ENCODE measurements at regions of chr19 and their contacts with region 1.

Region 1: GRCh38 chr19:29873024-29873800 is 61.4 kb downstream of the CCNE1 start:
- DNase-seq: peak; percentile 45 to 52
- H3K4me3 ChIP-seq: peak overlapping the region in 1 of 3 donors; percentile 11
- H3K27ac ChIP-seq: no peak overlapping the region
- H3K4me1 ChIP-seq: peaks cover 7 to 15% of the 10 kb centered on the region in 2 donors
- H3K27me3 ChIP-seq: no peaks in the 10 kb centered on the region
- CTCF ChIP-seq: peak; percentile 22 to 90 (median 76)
- POLR2A ChIP-seq: no peak

Region 2: DNA sequence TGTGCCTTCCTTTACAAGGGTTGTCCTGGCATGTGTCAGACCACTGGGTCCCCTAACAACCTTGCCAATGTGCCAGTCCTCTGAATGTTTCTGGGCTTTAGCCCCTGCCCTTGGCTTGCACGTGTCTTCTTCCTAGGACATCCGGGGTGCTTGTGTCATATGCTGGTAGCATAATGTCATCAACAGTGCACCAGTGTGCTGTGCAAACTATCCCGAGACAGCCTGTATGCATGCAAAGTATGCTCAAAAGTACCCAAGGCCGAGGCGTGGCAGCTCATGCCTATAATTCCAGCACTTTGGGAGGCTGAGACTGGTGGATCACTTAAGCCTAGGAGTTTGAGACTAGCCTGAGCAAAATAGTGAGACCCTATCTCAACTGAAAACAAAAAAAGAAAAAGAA is 137.4 kb before region 1 on chr19:
- intact Hi-C with region 1: loop called (anchors 10 kb)
- DNase-seq: no peak
- H3K4me3 ChIP-seq: no peak overlapping the region
- H3K27ac ChIP-seq: no peak overlapping the region
- H3K4me1 ChIP-seq: no peaks in the 10 kb centered on the region
- H3K27me3 ChIP-seq: no peaks in the 10 kb centered on the region
- CTCF ChIP-seq: no peak
- POLR2A ChIP-seq: no peak

Region 3: DNA sequence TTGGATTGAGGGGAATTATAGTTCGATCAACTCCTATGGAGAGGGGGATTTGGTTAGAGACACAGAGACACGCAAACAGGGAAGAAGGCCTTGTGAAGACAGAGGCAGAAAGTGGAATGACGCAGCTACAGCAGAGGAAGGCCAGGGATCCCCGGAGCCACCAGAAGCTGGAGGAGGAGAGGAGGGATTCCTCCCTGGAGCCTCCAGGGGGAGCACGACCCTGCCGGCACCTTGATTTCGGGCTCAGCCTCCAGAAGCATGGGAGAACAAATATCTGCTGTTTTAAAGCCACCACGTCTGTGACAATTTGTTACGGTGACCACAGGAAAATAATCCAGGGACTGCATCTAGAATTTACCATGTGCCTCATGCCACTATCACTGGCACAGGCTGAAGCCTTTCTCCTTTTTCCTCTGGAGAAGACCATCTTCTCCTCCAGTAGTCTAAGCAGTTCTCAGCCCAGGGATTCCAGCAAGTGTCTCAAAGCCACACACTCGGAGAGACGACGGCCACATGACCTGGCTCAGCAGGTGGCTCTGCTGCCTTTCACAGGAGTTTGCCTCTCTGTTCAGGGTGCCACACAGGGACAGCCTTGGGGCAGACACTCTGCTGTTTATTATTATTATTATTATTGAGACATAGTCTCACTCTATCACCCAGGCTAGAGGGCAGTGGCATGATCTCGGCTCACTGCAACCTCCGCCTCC is 101.4 kb before region 1 on chr19:
- intact Hi-C with region 1: loop called (anchors 5 kb)
- DNase-seq: peak; percentile 54 to 65
- H3K4me3 ChIP-seq: no peak overlapping the region
- H3K27ac ChIP-seq: no peak overlapping the region
- H3K4me1 ChIP-seq: no peaks in the 10 kb centered on the region
- H3K27me3 ChIP-seq: no peaks in the 10 kb centered on the region
- CTCF ChIP-seq: peak; percentile 33 to 80 (median 56)
- POLR2A ChIP-seq: no peak

Region 4: DNA sequence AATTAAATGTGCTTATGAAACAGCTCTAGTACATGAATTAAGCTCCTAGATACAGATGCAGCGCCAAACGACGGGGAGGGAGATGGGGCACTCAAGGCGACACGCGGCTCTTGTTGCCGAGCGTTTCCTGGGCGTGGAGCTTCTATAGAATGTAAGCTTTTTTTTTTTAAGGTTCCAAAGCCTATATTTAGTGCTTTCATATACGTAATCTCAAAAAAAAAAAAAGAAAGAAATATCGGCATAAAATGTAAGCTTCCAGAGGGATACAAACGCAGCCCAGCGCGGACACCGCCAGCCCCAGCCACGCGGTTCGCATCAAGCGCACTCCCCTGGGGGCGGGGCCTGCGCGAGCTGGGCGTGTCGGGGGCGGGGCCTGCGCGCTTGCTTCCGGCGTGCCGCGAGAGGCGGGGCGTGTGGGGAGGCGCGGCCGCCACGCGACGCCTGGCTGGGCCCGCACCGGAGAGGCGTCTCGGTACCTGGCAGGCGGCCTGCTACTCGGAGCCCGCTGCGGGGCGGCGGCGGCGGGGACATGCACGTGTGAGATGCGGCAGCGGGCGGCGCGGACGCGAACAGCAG is 68.7 kb after region 1 on chr19 and contains the start of gene URI1:
- intact Hi-C with region 1: no loop called
- DNase-seq: peak; percentile 89 to 91
- H3K4me3 ChIP-seq: peak within 1 kb of the TSS; percentile 27 to 67 (median 61)
- H3K27ac ChIP-seq: peak within 1 kb of the TSS; percentile 11 to 78 (median 31)
- H3K4me1 ChIP-seq: peaks cover 14 to 19% of the 10 kb centered on the region in 2 donors
- H3K27me3 ChIP-seq: no peaks in the 10 kb centered on the region
- CTCF ChIP-seq: no peak
- POLR2A ChIP-seq: peak in 1 of 2 donors; percentile 72
- total RNA-seq, gene URI1: 84.8 to 91.2 (median 86.3) TPM

Measured in thyroid gland (tissue), 4 donors.